ENCODE measurements at regions of chr6 and their contacts with region 1.

Region 1: DNA sequence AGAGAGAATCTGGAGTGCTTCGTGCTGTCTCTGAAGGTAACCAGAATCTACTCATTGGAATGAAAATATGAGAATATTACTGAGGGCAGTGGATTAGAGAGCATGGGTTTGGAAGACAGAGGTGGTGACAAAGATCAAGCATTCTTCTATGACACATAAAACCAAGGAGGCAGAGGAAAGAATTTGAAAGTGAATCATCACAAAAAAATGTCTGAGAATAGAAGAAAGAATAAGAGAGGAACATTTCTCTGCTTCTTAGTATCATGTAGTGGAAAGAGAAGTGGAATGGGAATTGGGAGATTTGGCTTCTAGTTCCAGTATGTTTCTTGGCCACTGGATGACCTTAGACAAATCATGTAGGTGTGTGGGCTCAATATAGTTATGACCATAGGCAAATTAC is 474.0 kb downstream of the TFAP2B start:
- DNase-seq: no peak
- ATAC-seq: no peak
- H3K4me3 ChIP-seq: no peak overlapping the region
- H3K4me3 Mint-ChIP-seq: no peak overlapping the region
- H3K27ac ChIP-seq: no peak overlapping the region
- H3K27ac Mint-ChIP-seq: no peak overlapping the region
- H3K4me1 ChIP-seq: no peaks in the 10 kb centered on the region
- H3K4me1 Mint-ChIP-seq: no peaks in the 10 kb centered on the region
- H3K27me3 ChIP-seq: no peaks in the 10 kb centered on the region
- H3K27me3 Mint-ChIP-seq: no peaks in the 10 kb centered on the region
- CTCF ChIP-seq: no peak

Region 2: DNA sequence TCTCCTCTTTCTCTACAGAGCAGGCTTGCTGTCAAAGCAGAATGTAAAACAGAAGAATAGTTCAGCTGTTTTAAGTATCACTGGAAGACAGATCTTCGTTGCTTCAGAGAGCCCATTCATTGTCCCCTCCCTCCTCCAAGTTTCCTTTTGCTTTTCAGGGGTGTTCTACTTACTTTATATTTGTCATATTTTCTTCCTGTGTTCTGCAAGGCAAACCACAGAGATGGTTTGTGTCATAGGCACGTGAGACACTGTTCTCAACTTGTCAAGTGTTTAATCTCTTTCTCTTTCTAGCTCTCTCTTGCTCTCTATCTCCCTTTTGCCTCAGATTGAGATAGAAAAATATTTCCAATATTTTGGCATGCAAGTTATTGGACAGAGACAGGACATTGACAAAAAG is 1014.0 kb before region 1 on chr6:
- CTCF ChIA-PET with region 1: no interaction called
- POLR2A ChIA-PET with region 1: no interaction called
- intact Hi-C with region 1: no loop called
- DNase-seq: no peak
- ATAC-seq: no peak
- H3K4me3 ChIP-seq: no peak overlapping the region
- H3K4me3 Mint-ChIP-seq: no peak overlapping the region
- H3K27ac ChIP-seq: no peak overlapping the region
- H3K27ac Mint-ChIP-seq: no peak overlapping the region
- H3K4me1 ChIP-seq: no peaks in the 10 kb centered on the region
- H3K4me1 Mint-ChIP-seq: no peaks in the 10 kb centered on the region
- H3K27me3 ChIP-seq: no peaks in the 10 kb centered on the region
- H3K27me3 Mint-ChIP-seq: no peaks in the 10 kb centered on the region
- CTCF ChIP-seq: no peak

Region 3: GRCh38 chr6:51322505-51322904 is 29.8 kb after region 1 on chr6:
- CTCF ChIA-PET with region 1: no interaction called
- POLR2A ChIA-PET with region 1: no interaction called
- intact Hi-C with region 1: loop called in 1 of 2 experiments (anchors 1 kb)
- DNase-seq: no peak
- ATAC-seq: no peak
- H3K4me3 ChIP-seq: no peak overlapping the region
- H3K4me3 Mint-ChIP-seq: no peak overlapping the region
- H3K27ac ChIP-seq: no peak overlapping the region
- H3K27ac Mint-ChIP-seq: no peak overlapping the region
- H3K4me1 ChIP-seq: no peaks in the 10 kb centered on the region
- H3K4me1 Mint-ChIP-seq: no peaks in the 10 kb centered on the region
- H3K27me3 ChIP-seq: no peaks in the 10 kb centered on the region
- H3K27me3 Mint-ChIP-seq: no peaks in the 10 kb centered on the region
- CTCF ChIP-seq: no peak

Region 4: GRCh38 chr6:51494342-51494741 is 201.7 kb after region 1 on chr6:
- CTCF ChIA-PET with region 1: no interaction called
- POLR2A ChIA-PET with region 1: no interaction called
- intact Hi-C with region 1: no loop called
- DNase-seq: no peak
- ATAC-seq: no peak
- H3K4me3 ChIP-seq: no peak overlapping the region
- H3K4me3 Mint-ChIP-seq: no peak overlapping the region
- H3K27ac ChIP-seq: no peak overlapping the region
- H3K27ac Mint-ChIP-seq: no peak overlapping the region
- H3K4me1 ChIP-seq: no peaks in the 10 kb centered on the region
- H3K4me1 Mint-ChIP-seq: no peaks in the 10 kb centered on the region
- H3K27me3 ChIP-seq: no peaks in the 10 kb centered on the region
- H3K27me3 Mint-ChIP-seq: no peaks in the 10 kb centered on the region
- CTCF ChIP-seq: no peak

Measured in CD8-positive, alpha-beta T cell (primary cell).